Activated CD8-positive, alpha-beta T cell treated with anti-CD3 and anti-CD28 coated beads, Interleukin-2, amount 10 ng/mL, durations not matched to agents 7 days and 5 days (primary cell): ENCODE measurements at regions of chr13 and their contacts with region 1.

Region 1: GRCh38 chr13:40666045-40666904 is at the start of gene FOXO1:
- DNase-seq: peak; percentile 88
- ATAC-seq: peak; percentile 76
- H3K4me3 Mint-ChIP-seq: peak within 1 kb of the TSS; percentile 90
- H3K27ac Mint-ChIP-seq: peak within 1 kb of the TSS; percentile 91
- H3K4me1 Mint-ChIP-seq: peaks cover 45% of the 10 kb centered on the region
- H3K27me3 Mint-ChIP-seq: no peaks in the 10 kb centered on the region
- total RNA-seq, gene FOXO1: 23.1 to 24.0 TPM

Region 2: GRCh38 chr13:39748961-39749360 is 917.3 kb before region 1 on chr13:
- CTCF ChIA-PET with region 1: no interaction called
- POLR2A ChIA-PET with region 1: no interaction called
- DNase-seq: no peak
- ATAC-seq: no peak
- H3K4me3 Mint-ChIP-seq: no peak overlapping the region
- H3K27ac Mint-ChIP-seq: no peak overlapping the region
- H3K4me1 Mint-ChIP-seq: no peaks in the 10 kb centered on the region
- H3K27me3 Mint-ChIP-seq: no peaks in the 10 kb centered on the region

Region 3: DNA sequence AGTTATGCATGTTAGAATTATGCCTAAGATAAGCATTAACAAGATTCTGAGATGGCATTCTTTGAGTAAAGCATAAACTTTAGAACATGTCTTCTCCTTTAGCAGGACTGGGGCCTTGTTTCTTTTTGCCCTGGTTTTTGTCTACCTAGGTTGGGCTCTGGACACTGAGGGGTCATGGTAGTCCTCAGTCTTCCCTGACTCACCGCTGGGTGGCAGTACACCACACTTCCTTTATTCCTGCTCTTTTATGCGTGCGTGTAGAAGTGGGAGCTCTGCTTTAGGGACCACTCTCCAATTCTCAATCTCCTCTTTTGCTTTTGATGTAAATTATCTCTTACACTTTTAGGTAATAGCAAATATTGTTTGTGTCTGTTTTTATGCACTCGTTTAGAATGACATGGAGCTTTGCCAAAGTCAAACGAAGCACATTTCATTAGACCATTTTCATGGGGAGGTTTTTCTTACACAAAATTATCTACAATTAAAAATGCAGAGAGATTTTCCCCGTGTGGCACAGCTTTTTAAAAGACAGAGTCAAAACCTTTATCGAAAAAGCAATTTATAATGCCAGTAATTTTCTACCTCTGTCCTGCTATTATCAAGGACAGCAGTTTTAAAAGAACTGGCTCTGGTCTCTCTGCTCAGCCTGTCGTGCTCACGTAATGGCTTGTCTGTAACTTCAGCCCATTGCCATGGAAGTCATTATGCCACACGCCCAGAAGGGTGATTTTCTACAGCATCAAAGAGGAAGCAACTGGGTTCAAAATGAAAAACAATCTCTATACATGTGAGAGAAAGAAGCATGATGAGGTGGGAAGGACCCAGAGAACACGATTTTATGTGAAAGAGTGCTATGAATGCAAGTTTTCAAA is 596.9 kb before region 1 on chr13:
- CTCF ChIA-PET with region 1: interaction called, 11 read pairs
- POLR2A ChIA-PET with region 1: no interaction called
- DNase-seq: peak; percentile 77
- ATAC-seq: peak; percentile 90
- H3K4me3 Mint-ChIP-seq: no peak overlapping the region
- H3K27ac Mint-ChIP-seq: no peak overlapping the region
- H3K4me1 Mint-ChIP-seq: peaks cover 25% of the 10 kb centered on the region
- H3K27me3 Mint-ChIP-seq: no peaks in the 10 kb centered on the region

Region 4: DNA sequence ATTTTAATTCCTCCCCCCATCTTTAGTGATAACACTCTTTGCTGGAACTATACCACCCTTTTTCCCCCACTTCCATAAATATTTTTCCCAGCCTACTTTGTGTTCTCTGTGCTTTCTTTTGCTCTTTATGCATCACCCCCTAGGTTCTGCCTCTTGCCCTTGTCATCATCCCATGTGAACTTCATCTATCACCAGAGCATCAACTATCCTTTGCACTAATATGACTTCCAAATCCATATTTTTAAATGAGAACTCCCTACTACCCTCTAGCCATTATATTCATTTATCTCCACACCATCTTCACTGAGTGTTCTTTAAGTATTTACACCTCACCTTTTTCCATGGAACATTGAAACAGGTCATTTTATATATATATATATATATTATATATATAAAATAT is 452.5 kb before region 1 on chr13:
- CTCF ChIA-PET with region 1: no interaction called
- POLR2A ChIA-PET with region 1: no interaction called
- DNase-seq: no peak
- ATAC-seq: peak; percentile 26
- H3K4me3 Mint-ChIP-seq: no peak overlapping the region
- H3K27ac Mint-ChIP-seq: no peak overlapping the region
- H3K4me1 Mint-ChIP-seq: peaks cover 14% of the 10 kb centered on the region
- H3K27me3 Mint-ChIP-seq: no peaks in the 10 kb centered on the region

Region 5: DNA sequence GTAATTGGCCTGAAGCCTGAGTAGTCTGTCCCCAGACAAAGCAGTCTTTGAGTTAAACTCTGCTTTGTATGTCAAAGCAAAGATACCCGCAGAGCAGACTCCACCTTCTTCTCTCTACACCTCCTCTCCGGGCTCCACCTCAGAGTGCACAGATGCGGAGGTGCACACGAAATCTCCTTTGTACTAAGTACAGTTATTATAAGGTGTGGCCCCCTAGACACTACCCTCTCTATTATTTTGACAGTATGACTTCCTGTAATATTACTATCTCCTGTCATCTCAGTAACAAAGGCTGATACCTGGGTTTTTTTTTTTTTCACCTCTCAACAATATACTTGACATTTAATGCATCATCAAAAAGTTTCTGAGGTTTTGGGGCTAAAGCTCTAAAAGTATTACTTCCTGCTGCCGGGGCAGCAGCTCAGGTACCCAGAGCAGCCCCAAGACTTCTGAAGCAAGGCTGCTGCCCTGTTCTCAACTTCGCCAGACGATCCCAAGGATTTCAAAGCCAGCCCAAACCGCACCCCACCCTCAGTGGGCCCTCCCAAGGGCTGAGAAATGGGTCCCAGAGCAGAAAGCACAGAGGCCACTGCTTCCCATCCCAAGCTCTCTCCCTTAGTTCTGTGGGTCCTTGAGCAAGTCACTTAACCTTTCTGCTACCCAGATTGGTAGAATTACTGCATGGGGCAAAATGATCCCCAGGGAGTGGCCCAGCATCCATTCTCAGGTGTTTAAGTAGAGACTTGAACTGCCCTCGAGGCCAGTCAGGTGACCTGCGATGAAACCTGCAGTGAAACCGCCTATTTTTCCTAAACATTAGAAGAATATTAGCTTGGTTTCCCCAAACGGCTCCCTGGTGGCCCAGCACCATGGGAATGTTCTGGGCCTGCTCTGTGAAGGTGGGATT is 180.4 kb before region 1 on chr13:
- CTCF ChIA-PET with region 1: no interaction called
- POLR2A ChIA-PET with region 1: interaction called, 10 read pairs
- DNase-seq: peak; percentile 84
- ATAC-seq: peak; percentile 95
- H3K4me3 Mint-ChIP-seq: peak overlapping the region; percentile 63
- H3K27ac Mint-ChIP-seq: peak overlapping the region; percentile 93
- H3K4me1 Mint-ChIP-seq: peaks cover 80% of the 10 kb centered on the region
- H3K27me3 Mint-ChIP-seq: no peaks in the 10 kb centered on the region

Region 6: DNA sequence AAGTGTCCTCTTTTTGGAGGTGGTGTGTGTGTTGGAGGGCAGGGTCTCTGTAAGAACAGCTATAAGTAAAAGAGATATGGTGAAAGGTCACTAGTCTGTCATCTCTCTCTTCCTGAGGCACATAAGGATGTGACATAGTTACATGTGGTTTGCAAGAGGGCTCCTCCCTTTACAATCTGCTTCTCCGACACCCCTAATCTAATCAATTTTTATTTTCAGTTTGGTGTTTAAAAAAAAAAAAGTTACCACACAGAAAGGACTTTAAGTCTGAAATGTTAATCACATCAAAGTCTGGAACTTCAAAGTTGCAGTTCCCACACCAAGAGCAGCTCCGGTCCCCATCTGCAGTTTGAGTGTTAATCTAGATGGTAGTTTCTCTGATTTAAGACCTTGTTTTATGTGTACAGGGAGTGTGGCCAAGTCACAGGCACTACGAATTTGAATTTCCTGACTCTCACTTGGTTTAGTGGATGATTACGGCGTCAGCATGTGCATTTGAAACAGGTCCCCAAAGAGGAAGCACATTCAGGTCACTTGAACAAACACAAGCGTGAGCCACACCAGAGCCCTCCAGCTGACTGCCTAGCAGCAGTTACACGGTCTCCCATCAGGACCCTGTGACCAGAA is 53.0 kb before region 1 on chr13:
- CTCF ChIA-PET with region 1: interaction called, 10 read pairs
- POLR2A ChIA-PET with region 1: interaction called, 19 read pairs
- DNase-seq: peak; percentile 76
- ATAC-seq: peak; percentile 85
- H3K4me3 Mint-ChIP-seq: peak overlapping the region; percentile 82
- H3K27ac Mint-ChIP-seq: peak overlapping the region; percentile 97
- H3K4me1 Mint-ChIP-seq: peaks cover 78% of the 10 kb centered on the region
- H3K27me3 Mint-ChIP-seq: no peaks in the 10 kb centered on the region

Region 7: DNA sequence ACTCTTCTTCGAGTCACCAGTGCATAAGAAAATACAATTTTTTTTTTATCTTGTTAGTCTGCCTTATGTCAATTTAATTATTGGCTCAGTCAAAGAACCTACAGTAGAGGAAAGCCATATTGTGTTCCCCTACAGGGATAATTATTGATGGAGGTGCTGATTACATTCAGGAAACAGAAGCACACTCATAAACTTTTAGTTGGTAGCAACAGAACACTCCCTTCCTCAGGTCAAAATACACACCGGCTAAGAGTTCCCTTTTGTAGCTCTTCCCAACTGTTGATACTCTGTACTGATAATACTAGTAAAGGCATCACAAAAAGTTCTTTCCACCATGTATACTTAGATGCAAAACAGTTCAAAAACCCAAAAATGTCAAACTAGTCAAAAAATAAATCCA is 18.2 kb before region 1 on chr13:
- CTCF ChIA-PET with region 1: interaction called, 10 read pairs
- POLR2A ChIA-PET with region 1: interaction called, 14 read pairs
- DNase-seq: no peak
- ATAC-seq: no peak
- H3K4me3 Mint-ChIP-seq: no peak overlapping the region
- H3K27ac Mint-ChIP-seq: no peak overlapping the region
- H3K4me1 Mint-ChIP-seq: peaks cover 88% of the 10 kb centered on the region
- H3K27me3 Mint-ChIP-seq: no peaks in the 10 kb centered on the region

Region 8: GRCh38 chr13:40682449-40683240 is 16.4 kb after region 1 on chr13:
- CTCF ChIA-PET with region 1: interaction called, 27 read pairs
- POLR2A ChIA-PET with region 1: no interaction called
- DNase-seq: no peak
- ATAC-seq: no peak
- H3K4me3 Mint-ChIP-seq: no peak overlapping the region
- H3K27ac Mint-ChIP-seq: peak overlapping the region; percentile 14
- H3K4me1 Mint-ChIP-seq: peaks cover 7% of the 10 kb centered on the region
- H3K27me3 Mint-ChIP-seq: no peaks in the 10 kb centered on the region